ENCODE measurements at regions of chr2 and their contacts with region 1.

Region 1: GRCh38 chr2:178478439-178479274 is at the start of gene FKBP7:
- DNase-seq: peak; percentile 81 to 98 (median 91)

Region 2: GRCh38 chr2:178450774-178451525 is 27.7 kb before region 1 on chr2 and contains the starts of genes PJVK and PRKRA:
- intact Hi-C with region 1: loop called (anchors 1 kb)
- DNase-seq: peak; percentile 96 to 100 (median 98)